ENCODE measurements at regions of chr5 and their contacts with region 1.

Region 1: DNA sequence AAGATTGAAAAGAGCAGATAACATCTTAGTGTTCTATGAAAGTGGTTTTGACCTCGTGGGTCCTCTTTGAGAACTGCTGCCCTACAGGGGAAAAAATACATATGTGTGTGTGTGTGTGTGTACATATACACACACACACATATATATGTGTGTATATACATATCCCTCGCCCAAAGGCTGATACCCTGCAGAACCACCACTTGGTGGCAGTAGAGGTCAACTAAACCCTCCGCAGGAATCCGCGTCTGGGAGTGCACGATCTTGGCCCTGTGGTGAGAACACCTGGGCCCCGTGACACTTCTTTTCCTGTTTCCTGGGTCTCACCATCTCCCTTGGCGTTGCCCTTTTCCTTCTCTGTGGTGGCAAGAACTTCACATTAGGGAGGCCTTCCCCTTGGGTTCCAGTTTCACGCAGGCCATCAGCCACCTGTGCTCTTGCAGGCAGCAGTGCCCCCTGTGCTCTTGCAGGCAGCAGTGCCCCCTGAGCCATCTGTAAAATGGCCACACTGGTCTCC is 8.2 kb downstream of the IL9 start:
- DNase-seq: peak; percentile 26 to 79 (median 45)
- ATAC-seq: peak; percentile 85
- H3K4me3 ChIP-seq: no peak overlapping the region
- H3K4me3 Mint-ChIP-seq: no peak overlapping the region
- H3K27ac ChIP-seq: no peak overlapping the region
- H3K27ac Mint-ChIP-seq: no peak overlapping the region
- H3K4me1 ChIP-seq: peaks cover 8% of the 10 kb centered on the region
- H3K4me1 Mint-ChIP-seq: peaks cover 10% of the 10 kb centered on the region
- H3K27me3 ChIP-seq: peaks cover 0 to 4% of the 10 kb centered on the region in 2 experiments
- H3K27me3 Mint-ChIP-seq: peaks cover 20% of the 10 kb centered on the region
- CTCF ChIP-seq: peak; percentile 81

Region 2: GRCh38 chr5:135466178-135467050 is 421.0 kb before region 1 on chr5:
- CTCF ChIA-PET with region 1: no interaction called
- POLR2A ChIA-PET with region 1: no interaction called
- intact Hi-C with region 1: no loop called
- DNase-seq: peak; percentile 35 to 77 (median 48)
- ATAC-seq: peak; percentile 68
- H3K4me3 ChIP-seq: peak overlapping the region; percentile 14
- H3K4me3 Mint-ChIP-seq: peak overlapping the region; percentile 53
- H3K27ac ChIP-seq: no peak overlapping the region
- H3K27ac Mint-ChIP-seq: no peak overlapping the region
- H3K4me1 ChIP-seq: peaks cover 14% of the 10 kb centered on the region
- H3K4me1 Mint-ChIP-seq: peaks cover 11% of the 10 kb centered on the region
- H3K27me3 ChIP-seq: peaks cover 22 to 26% of the 10 kb centered on the region in 2 experiments
- H3K27me3 Mint-ChIP-seq: peaks cover 67% of the 10 kb centered on the region
- CTCF ChIP-seq: peak; percentile 71

Region 3: GRCh38 chr5:135930029-135930948 is 42.9 kb after region 1 on chr5:
- CTCF ChIA-PET with region 1: no interaction called
- POLR2A ChIA-PET with region 1: no interaction called
- intact Hi-C with region 1: no loop called
- DNase-seq: no peak
- ATAC-seq: no peak
- H3K4me3 ChIP-seq: no peak overlapping the region
- H3K4me3 Mint-ChIP-seq: no peak overlapping the region
- H3K27ac ChIP-seq: no peak overlapping the region
- H3K27ac Mint-ChIP-seq: no peak overlapping the region
- H3K4me1 ChIP-seq: no peaks in the 10 kb centered on the region
- H3K4me1 Mint-ChIP-seq: no peaks in the 10 kb centered on the region
- H3K27me3 ChIP-seq: peaks cover 22 to 46% of the 10 kb centered on the region in 2 experiments
- H3K27me3 Mint-ChIP-seq: peaks cover 62% of the 10 kb centered on the region
- CTCF ChIP-seq: no peak

Region 4: GRCh38 chr5:136062366-136063274 is 175.2 kb after region 1 on chr5:
- CTCF ChIA-PET with region 1: no interaction called
- POLR2A ChIA-PET with region 1: no interaction called
- intact Hi-C with region 1: loop called (anchors 1 to 5 kb)
- DNase-seq: peak in 4 of 14 experiments; percentile 12 to 59 (median 48)
- ATAC-seq: no peak
- H3K4me3 ChIP-seq: no peak overlapping the region
- H3K4me3 Mint-ChIP-seq: no peak overlapping the region
- H3K27ac ChIP-seq: no peak overlapping the region
- H3K27ac Mint-ChIP-seq: no peak overlapping the region
- H3K4me1 ChIP-seq: no peaks in the 10 kb centered on the region
- H3K4me1 Mint-ChIP-seq: no peaks in the 10 kb centered on the region
- H3K27me3 ChIP-seq: no peaks in the 10 kb centered on the region
- H3K27me3 Mint-ChIP-seq: no peaks in the 10 kb centered on the region
- CTCF ChIP-seq: no peak

Region 5: DNA sequence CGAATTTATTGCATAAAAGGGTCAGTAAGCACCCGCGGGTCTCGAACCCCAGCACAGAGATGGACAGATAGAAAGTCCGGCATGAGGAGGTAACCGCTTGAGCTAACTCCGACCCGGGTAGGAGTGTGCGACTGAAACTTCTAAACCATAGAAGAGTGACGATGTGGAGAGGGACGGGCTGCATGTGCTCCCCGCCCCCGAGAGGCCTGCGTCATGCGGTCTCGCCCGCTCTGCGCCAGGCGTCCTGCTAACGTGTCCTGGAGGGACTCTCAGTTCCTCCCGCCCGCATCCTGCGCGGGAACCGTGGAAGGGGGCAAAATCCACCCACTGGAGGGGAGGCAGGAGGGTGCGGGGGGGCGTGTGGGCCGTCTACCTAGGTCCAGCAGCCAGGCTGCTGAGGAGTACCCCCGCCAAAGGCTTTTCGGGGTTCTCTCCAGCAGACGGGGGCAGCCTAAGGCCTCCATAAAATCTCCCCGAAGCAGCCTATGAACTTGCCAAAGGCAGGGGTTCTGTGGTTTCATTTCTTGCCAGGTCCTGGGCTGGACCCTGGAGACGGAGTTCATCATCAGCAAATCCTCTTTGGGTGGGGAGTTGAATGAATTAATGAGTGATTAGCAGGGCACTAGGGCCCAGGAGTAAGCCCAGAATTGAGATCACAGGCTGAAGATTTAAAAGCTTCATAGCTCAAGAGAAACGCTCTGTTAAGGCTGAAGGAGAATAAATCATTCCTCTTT is 193.2 kb after region 1 on chr5:
- CTCF ChIA-PET with region 1: no interaction called
- POLR2A ChIA-PET with region 1: no interaction called
- intact Hi-C with region 1: loop called (anchors 1 to 2 kb)
- DNase-seq: peak; percentile 12 to 78 (median 47)
- ATAC-seq: peak; percentile 94
- H3K4me3 ChIP-seq: peak overlapping the region; percentile 29
- H3K4me3 Mint-ChIP-seq: peak overlapping the region; percentile 67
- H3K27ac ChIP-seq: no peak overlapping the region
- H3K27ac Mint-ChIP-seq: no peak overlapping the region
- H3K4me1 ChIP-seq: peaks cover 18% of the 10 kb centered on the region
- H3K4me1 Mint-ChIP-seq: no peaks in the 10 kb centered on the region
- H3K27me3 ChIP-seq: peaks cover 22 to 49% of the 10 kb centered on the region in 2 experiments
- H3K27me3 Mint-ChIP-seq: peaks cover 51% of the 10 kb centered on the region
- CTCF ChIP-seq: no peak

Region 6: DNA sequence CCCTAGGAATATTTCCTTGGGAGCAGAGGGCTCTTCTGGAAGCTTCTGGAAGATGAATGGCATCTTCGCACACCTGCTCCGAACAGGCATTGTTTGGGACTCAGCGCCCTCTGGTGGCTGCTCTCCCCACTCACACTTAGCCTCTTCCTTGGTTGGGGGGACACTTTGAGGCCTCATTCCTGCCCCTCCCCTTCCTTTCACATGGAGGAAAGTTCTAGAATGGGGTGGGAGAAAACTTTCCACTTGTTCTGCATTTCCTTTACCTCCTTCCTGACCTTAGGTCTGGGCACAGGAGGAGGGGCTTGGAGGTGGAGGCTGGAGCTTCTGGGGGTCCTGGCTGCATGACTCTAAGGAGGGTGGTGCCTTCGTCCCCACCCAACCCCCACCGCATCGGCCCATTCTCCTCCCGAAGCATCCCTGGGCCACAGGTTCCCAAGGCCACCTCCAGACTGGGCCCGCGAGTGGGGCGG is 324.9 kb after region 1 on chr5:
- CTCF ChIA-PET with region 1: no interaction called
- POLR2A ChIA-PET with region 1: no interaction called
- intact Hi-C with region 1: loop called in 1 of 2 experiments (anchors 1 kb)
- DNase-seq: peak in 12 of 14 experiments; percentile 7 to 60 (median 22)
- ATAC-seq: no peak
- H3K4me3 ChIP-seq: no peak overlapping the region
- H3K4me3 Mint-ChIP-seq: no peak overlapping the region
- H3K27ac ChIP-seq: no peak overlapping the region
- H3K27ac Mint-ChIP-seq: no peak overlapping the region
- H3K4me1 ChIP-seq: no peaks in the 10 kb centered on the region
- H3K4me1 Mint-ChIP-seq: no peaks in the 10 kb centered on the region
- H3K27me3 ChIP-seq: peaks cover 0 to 4% of the 10 kb centered on the region in 2 experiments
- H3K27me3 Mint-ChIP-seq: peaks cover 27% of the 10 kb centered on the region
- CTCF ChIP-seq: peak; percentile 69

Region 7: DNA sequence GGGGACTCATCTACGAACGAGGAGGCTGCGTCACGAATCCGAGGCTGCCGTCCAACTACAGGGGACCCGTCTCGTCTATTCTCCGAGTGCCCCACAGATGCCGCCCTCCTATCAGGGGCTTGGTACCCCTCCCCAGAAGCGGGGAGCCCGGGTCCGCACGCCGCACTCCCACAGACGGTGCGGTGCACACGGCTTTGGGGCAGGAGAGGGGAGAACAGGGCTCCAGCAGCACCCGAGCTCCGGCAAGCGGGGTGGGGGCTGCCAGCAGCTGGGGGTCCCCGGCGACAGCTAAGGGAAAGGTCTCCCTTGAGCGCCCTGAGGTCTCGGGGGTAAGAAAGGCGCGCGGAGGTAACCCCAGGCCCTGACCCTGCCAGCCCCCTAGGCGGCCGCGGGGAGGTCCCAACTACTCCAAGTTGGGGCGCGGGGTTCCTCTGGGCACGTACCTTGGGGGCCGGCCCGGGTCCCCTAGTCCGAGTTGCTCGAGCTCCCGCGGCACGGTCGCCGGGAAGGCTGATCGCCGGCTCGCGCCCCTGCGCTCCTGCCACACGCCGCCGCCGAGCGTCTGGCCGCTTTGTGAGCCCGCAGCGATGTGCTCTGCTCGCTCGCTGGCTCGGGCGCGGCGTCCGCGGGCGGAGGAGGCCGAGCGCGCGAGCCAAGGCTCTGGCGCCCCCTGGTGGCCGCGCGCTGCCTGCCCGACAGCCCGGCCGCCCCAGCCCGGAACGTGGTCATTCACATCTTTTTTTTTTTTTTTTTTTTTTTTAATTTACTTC is 1611.5 kb after region 1 on chr5 and contains the start of gene SPOCK1:
- CTCF ChIA-PET with region 1: no interaction called
- POLR2A ChIA-PET with region 1: no interaction called
- intact Hi-C with region 1: loop called in 1 of 2 experiments (anchors 5 kb)
- DNase-seq: peak in 12 of 14 experiments; percentile 6 to 73 (median 36)
- ATAC-seq: no peak
- H3K4me3 ChIP-seq: no peak within 1 kb of the TSS
- H3K4me3 Mint-ChIP-seq: no peak within 1 kb of the TSS
- H3K27ac ChIP-seq: no peak within 1 kb of the TSS
- H3K27ac Mint-ChIP-seq: no peak within 1 kb of the TSS
- H3K4me1 ChIP-seq: peaks cover 6% of the 10 kb centered on the region
- H3K4me1 Mint-ChIP-seq: no peaks in the 10 kb centered on the region
- H3K27me3 ChIP-seq: peaks cover 20 to 37% of the 10 kb centered on the region in 2 experiments
- H3K27me3 Mint-ChIP-seq: peaks cover 35% of the 10 kb centered on the region
- CTCF ChIP-seq: no peak
- total RNA-seq, gene SPOCK1: not detected

Measured in CD4-positive, alpha-beta T cell (primary cell).